Posterior cingulate gyrus (tissue), 11 donors: ENCODE measurements at regions of chr14 and their contacts with region 1.

Region 1: DNA sequence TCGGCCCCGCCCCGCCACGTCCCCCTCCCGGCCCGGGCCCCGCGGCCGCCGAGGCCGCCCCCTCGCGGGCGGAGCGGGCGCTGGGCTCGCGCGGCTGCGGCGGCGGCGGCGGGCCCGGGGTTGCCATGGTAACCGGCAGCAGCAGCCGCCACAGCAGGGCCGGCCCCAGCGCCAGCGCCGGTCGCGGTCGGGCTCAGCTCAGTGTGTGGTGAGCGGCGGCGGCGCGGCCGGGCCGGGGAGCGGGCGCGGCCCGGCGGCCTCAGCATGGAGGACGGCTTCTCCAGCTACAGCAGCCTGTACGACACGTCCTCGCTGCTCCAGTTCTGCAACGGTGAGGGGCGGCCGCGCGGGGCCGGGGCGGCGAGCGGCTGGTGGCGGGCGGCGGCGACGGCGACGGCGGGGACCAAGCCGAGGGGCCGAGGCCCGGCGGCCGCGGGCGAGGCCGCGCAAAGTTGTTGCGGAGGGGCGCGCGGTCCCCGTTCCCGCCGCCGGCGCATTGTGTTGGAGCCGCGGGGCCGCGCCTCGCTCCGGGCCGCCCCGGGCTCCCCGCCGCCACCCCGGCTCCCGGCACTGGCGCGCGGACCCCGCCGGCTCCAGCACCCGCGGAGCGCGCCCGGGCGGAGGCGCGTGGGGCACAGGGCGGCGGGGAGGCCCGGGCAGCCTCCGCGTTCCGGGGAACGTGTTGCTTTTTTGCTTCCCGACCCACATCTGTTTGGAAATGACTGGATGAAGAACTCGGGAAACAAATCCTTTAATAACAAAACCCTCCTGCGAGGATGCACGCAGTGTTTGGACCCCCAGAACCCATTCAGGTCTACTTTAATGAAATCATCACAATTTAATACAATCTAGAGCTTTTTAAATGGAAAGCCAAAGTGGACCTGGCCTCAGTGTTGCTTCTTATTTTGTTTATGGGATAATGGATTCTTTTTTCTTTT is at the start of gene EML1:
- DNase-seq: peak; percentile 72 to 98 (median 84)

Region 2: GRCh38 chr14:99683619-99684355 is 109.7 kb before region 1 on chr14 and contains the start of gene CYP46A1:
- intact Hi-C with region 1: loop called (anchors 2 kb)
- DNase-seq: peak; percentile 99 to 100 (median 100)

Region 3: DNA sequence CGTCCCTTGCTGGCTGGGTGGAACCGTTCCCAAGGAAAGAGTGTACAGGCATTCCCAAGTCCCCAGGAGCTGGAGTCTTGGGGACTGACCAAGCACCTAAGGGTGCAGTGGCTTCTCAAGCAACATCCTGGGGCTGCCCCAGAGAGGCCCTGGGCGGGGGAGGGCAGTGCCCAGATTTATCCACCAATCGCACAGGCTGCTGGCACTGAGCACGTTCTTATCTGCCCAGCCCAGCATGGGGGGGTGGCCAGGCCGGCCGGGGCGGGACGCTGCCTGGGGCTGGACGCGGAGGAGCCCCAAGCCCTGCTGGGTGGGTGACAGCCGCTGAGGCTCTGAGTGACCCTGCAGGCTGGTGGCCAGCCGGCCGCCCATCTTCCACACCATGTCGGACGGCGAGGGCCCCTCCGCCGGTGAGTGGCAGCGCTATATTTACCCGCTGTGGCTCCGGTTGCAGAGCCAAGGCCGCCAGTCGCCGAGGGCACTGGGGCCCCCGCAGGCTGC is 56.0 kb before region 1 on chr14:
- intact Hi-C with region 1: loop called (anchors 5 kb)
- DNase-seq: peak in 6 of 10 donors; percentile 35 to 91 (median 66)

Region 4: DNA sequence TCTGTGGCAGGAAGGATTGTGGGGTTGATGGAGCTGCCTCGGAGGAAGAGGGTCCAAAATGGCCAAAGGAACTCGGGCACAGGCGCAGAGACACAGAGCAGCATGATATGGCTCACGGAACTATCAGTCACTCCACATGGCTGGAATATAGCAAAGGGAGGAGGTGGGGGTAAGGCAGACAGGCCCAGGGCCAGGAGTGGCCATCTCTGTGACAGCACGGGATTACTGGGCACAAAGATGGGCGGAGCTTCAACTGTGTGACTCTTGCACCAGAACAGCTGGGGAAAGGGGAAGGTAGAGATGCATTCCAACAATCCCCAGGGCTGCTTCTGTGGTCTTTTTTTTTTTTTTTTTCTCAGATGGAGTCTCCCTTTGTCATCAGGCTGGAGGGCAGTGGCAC is 25.1 kb before region 1 on chr14:
- intact Hi-C with region 1: no loop called
- DNase-seq: peak in 1 of 10 donors; percentile 55

Region 5: GRCh38 chr14:99821519-99822508 is 28.3 kb after region 1 on chr14:
- intact Hi-C with region 1: loop called (anchors 1 kb)
- DNase-seq: no peak

Region 6: GRCh38 chr14:99884834-99885648 is 91.6 kb after region 1 on chr14:
- intact Hi-C with region 1: loop called (anchors 5 kb)
- DNase-seq: no peak

Region 7: DNA sequence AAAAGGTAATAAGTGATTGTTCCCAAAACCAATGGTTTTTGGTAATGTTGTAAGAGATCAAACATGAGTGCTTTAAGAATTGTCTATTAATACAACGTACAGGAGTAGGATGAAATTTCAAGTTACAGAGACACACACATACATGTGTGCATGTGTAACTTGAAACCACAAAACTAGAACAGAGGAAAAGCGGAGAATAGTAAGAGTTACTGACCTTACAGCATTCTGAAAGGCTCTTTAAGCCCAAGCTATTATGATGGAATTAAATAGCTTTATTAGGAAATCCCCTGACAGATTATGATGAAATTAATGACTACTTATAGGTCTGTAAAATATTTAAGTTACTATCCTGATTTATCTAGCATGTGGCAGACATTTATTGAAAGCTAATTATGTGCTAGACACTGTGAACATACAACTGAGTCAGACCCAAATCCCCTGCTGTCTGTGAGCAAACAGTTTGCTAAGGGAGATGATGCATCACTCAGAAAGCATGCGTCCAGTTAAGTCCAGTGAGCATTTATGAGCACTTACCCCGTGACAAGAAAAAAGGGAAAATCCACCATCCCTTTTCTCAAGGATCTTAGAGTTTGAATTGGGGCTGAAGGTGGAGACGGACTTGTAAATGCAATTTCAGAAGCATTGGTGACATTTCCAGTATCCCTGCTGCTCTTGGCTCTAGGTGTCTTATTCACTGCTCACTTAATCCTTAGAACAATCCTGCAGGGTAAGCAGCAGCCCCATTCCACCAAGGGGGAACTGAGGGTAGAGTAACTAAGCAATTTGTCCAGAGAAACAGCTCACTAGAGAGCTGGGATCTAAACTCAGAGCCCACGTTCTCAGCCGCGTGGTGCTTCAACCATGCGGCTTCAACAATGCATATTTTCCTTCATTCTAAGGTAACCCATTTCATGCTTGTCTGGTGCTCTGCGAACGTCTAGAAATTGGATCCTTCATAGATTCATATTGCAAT is 117.1 kb after region 1 on chr14:
- intact Hi-C with region 1: no loop called
- DNase-seq: no peak

Region 8: GRCh38 chr14:100025111-100025510 is 231.6 kb after region 1 on chr14:
- intact Hi-C with region 1: no loop called
- DNase-seq: no peak

Region 9: DNA sequence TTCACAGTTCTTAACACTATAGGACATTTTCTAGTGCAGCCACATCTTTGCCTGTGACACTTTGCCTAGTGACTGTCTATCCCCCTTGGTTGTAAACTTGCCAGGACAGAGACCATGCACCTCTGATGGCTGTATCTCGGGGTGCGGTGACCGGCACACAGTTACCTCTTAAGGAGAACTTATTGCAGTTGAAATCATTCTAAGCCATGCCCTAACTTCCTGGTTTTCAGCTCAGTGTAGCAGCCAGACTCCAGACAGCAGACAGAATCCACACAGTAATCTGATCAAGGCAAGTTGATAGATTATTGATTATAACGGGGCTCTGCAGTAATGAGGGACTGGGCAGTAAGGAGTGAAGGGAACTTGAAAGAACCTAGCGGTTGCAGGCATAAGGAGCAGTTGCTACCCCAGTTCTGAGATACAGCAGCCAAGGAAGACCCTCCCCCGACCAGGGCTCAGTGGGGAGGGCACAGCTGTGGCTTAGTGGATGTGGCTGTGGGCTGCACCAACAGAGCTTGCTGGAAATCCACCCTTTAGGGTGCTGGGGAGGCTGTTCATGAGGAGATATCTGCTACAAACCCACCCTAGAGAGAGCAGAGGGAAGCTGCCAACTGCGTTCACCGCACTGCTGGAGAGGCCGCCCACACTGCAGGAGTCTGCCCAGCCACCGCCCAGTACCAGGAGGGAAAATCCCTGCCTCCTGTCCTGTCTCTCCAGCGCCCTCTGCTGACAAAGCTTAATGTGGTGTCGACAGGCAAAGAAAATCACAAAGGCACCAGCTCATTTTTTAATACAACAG is 851.9 kb after region 1 on chr14:
- intact Hi-C with region 1: no loop called
- DNase-seq: peak; percentile 63 to 96 (median 84)